A673 (cell line): ENCODE measurements at regions of chr11 and their contacts with region 1.

Region 1: DNA sequence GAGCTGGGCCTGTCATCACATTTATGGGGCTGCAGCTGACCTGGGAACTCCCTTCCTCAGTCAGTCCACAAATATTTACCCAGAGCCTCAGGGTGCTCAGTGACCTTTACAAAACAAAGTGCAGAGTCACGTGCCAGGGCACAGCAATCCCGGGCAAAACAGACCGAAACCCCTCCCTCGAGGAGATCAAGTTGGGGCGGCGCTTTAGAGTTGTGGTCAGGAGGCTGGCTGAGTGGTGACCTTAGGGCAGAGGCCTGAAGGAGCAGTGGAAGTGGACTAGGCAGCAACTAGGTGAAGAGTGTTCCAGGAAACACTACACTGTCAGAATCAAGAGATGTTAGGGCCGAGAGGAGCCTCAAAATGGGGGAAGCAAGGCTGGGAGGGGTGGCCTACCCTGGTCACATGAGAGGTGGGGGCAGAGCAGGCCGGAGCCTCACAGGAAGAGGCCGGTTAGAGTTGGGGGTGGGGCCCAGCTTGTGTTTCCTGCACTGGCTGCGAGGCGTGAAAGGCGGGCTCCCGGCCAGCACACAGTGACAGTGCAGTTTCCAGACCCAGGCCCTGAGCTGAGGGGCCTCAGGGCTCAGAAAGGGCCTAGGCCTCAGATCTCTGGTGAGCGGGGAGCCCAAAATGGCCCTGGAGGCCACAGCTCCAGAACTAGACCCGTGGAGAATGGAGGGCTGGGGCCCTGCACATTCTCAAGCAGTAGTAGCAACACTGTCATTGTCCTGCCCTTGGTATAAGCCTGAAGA is 3.7 kb upstream of the NEAT1 start:
- DNase-seq: peak; percentile 99
- H3K4me3 ChIP-seq: peak overlapping the region; percentile 31
- H3K27ac ChIP-seq: peak overlapping the region; percentile 100
- H3K4me1 ChIP-seq: peaks cover 69% of the 10 kb centered on the region
- H3K27me3 ChIP-seq: no peaks in the 10 kb centered on the region
- CTCF ChIP-seq: no peak

Region 2: GRCh38 chr11:65382033-65382807 is 36.7 kb before region 1 on chr11 and contains the start of gene SLC25A45:
- CTCF ChIA-PET with region 1: interaction called, 3 read pairs
- POLR2A ChIA-PET with region 1: interaction called, 3 read pairs
- intact Hi-C with region 1: loop called (anchors 5 kb)
- DNase-seq: peak; percentile 99
- H3K4me3 ChIP-seq: peak within 1 kb of the TSS; percentile 40
- H3K27ac ChIP-seq: peak within 1 kb of the TSS; percentile 94
- H3K4me1 ChIP-seq: peaks cover 40% of the 10 kb centered on the region
- H3K27me3 ChIP-seq: no peaks in the 10 kb centered on the region
- CTCF ChIP-seq: peak; percentile 82
- total RNA-seq, gene SLC25A45: 5.3 and 7.4 TPM in 2 replicates

Region 3: GRCh38 chr11:65401073-65401802 is 17.6 kb before region 1 on chr11:
- CTCF ChIA-PET with region 1: no interaction called
- POLR2A ChIA-PET with region 1: interaction called, 11 read pairs
- intact Hi-C with region 1: no loop called
- DNase-seq: no peak
- H3K4me3 ChIP-seq: no peak overlapping the region
- H3K27ac ChIP-seq: peak overlapping the region; percentile 50
- H3K4me1 ChIP-seq: no peaks in the 10 kb centered on the region
- H3K27me3 ChIP-seq: no peaks in the 10 kb centered on the region
- CTCF ChIP-seq: no peak

Region 4: DNA sequence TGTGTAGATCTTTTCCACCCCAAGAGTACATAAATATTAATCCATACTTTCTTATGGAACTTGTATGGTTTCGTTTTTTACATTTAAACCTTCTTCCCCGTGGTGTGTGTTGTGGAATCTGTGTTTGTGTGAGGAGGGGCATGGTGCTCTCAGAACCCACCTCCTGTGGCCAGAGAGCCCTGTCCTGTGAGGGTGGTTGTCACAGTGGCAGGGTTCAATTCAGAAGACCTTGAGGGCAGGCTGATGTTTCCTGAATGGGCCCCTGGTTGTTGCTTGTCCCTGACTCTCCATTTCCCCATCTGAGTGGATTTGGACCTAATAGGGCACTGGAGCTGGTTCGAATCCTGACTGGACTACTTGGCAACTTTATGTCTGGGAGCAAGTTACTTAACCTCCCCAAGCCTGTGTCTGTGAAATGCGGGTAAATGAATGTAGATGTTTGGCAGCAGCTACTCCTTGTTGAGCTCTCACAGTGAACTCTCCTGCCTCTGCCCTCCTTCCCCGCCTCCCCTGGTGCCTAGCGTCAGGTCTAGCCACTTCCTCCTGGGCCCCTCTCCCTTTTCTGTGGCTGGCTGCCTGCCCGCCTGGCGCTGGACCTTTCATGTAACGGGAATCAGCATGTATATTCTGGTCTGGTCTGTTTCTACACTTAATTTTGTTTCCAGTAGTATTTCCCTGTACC is 11.0 kb after region 1 on chr11:
- CTCF ChIA-PET with region 1: interaction called, 5 read pairs
- POLR2A ChIA-PET with region 1: interaction called, 3 read pairs
- intact Hi-C with region 1: loop called (anchors 1 kb)
- DNase-seq: no peak
- H3K4me3 ChIP-seq: peak overlapping the region; percentile 66
- H3K27ac ChIP-seq: peak overlapping the region; percentile 100
- H3K4me1 ChIP-seq: peaks cover 60% of the 10 kb centered on the region
- H3K27me3 ChIP-seq: no peaks in the 10 kb centered on the region
- CTCF ChIP-seq: no peak

Region 5: GRCh38 chr11:65477149-65477965 is 58.5 kb after region 1 on chr11:
- CTCF ChIA-PET with region 1: no interaction called
- POLR2A ChIA-PET with region 1: interaction called, 3 read pairs
- intact Hi-C with region 1: loop called (anchors 2 kb)
- DNase-seq: peak; percentile 97
- H3K4me3 ChIP-seq: peak overlapping the region; percentile 68
- H3K27ac ChIP-seq: peak overlapping the region; percentile 96
- H3K4me1 ChIP-seq: peaks cover 21% of the 10 kb centered on the region
- H3K27me3 ChIP-seq: no peaks in the 10 kb centered on the region
- CTCF ChIP-seq: no peak

Region 6: DNA sequence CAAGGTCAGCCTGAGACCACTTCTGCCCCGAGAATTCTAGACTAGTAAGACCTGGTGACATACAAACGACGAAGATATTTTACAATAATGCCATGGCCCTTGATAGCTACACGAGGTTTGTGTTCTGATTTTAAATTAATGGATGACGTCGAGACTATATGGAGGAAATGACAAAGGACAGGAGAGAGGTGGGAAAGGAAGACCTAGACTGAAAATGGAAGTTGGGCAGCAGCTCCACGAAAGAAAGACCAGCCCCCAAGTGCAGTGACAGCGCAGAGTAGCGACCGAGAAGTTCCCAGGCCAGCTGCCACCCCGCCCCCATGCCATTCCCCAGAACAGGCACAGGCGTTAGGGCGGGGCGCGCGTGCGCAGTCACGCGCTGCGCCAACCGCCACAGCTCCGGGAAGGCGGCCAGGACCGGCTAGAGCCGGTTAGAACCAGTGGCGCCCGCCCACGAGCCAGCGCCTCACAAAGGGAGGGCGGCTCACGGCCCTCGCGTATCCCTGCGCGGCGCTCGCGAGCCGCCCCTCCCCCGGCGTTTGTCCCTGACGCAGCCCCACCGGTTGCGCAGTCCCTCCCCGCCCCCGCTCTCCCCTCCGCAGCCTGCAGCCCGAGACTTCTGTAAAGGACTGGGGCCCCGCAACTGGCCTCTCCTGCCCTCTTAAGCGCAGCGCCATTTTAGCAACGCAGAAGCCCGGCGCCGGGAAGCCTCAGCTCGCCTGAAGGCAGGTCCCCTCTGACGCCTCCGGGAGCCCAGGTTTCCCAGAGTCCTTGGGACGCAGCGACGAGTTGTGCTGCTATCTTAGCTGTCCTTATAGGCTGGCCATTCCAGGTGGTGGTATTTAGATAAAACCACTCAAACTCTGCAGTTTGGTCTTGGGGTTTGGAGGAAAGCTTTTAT is 78.5 kb after region 1 on chr11:
- CTCF ChIA-PET with region 1: interaction called, 4 read pairs
- POLR2A ChIA-PET with region 1: interaction called, 19 read pairs
- intact Hi-C with region 1: loop called (anchors 2 kb)
- DNase-seq: peak; percentile 100
- H3K4me3 ChIP-seq: peak overlapping the region; percentile 85
- H3K27ac ChIP-seq: peak overlapping the region; percentile 100
- H3K4me1 ChIP-seq: peaks cover 44% of the 10 kb centered on the region
- H3K27me3 ChIP-seq: no peaks in the 10 kb centered on the region
- CTCF ChIP-seq: no peak

Region 7: GRCh38 chr11:65506770-65507505 is 88.1 kb after region 1 on chr11:
- CTCF ChIA-PET with region 1: interaction called, 92 read pairs
- POLR2A ChIA-PET with region 1: interaction called, 21 read pairs
- intact Hi-C with region 1: loop called (anchors 1 kb)
- DNase-seq: peak; percentile 70
- H3K4me3 ChIP-seq: peak overlapping the region; percentile 85
- H3K27ac ChIP-seq: peak overlapping the region; percentile 72
- H3K4me1 ChIP-seq: peaks cover 33% of the 10 kb centered on the region
- H3K27me3 ChIP-seq: no peaks in the 10 kb centered on the region
- CTCF ChIP-seq: no peak